Dendritic cell treated with granulocyte-macrophage colony-stimulating factor and Interleukin-4, amounts not matched to agents 40 ng/mL and 50 ng/mL, for 4 days (primary cell): ENCODE measurements at regions of chr2 and their contacts with region 1.

Region 1: GRCh38 chr2:172596776-172597175 is 40.9 kb downstream of the PDK1 start:
- H3K4me3 Mint-ChIP-seq: no peak overlapping the region
- H3K27ac Mint-ChIP-seq: no peak overlapping the region
- H3K4me1 Mint-ChIP-seq: no peaks in the 10 kb centered on the region
- H3K27me3 Mint-ChIP-seq: no peaks in the 10 kb centered on the region

Region 2: GRCh38 chr2:172674034-172674967 is 77.5 kb after region 1 on chr2:
- intact Hi-C with region 1: loop called (anchors 10 kb)
- H3K4me3 Mint-ChIP-seq: peak overlapping the region; percentile 62
- H3K27ac Mint-ChIP-seq: no peak overlapping the region
- H3K4me1 Mint-ChIP-seq: peaks cover 9% of the 10 kb centered on the region
- H3K27me3 Mint-ChIP-seq: peaks cover 14% of the 10 kb centered on the region